ENCODE measurements at regions of chr1 and their contacts with region 1.

Region 1: GRCh38 chr1:175154629-175155472 is 37.7 kb downstream of the KIAA0040 start:
- DNase-seq: peak; percentile 51 to 80 (median 57)
- H3K4me3 ChIP-seq: no peak overlapping the region
- H3K4me3 Mint-ChIP-seq: no peak overlapping the region
- H3K27ac ChIP-seq: no peak overlapping the region
- H3K27ac Mint-ChIP-seq: peak overlapping the region in 1 of 8 donors; percentile 60
- H3K4me1 ChIP-seq: peaks cover 10% of the 10 kb centered on the region
- H3K4me1 Mint-ChIP-seq: peaks cover 15 to 18% (median 17%) of the 10 kb centered on the region in 3 donors
- H3K27me3 ChIP-seq: peaks cover 4% of the 10 kb centered on the region
- H3K27me3 Mint-ChIP-seq: peaks cover 26 to 30% of the 10 kb centered on the region in 2 donors

Region 2: DNA sequence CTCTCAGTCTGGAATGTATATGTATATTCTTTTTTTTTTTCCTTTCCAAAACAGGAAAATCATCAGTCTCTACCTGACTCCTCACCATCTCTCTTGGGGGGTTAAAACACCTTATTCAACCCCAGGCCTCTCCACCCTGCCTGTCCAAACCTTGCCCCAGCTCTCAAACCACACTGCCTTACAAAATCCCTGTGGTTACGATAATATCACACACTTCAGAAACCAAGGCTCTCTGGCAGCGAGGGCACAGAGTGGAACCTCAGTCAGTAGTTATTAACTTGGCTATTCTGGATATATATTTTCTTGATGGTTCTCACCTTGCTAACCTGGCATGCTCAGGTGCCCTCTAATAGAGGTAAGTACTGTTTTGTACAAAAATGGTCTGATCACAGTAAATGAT is 13.0 kb after region 1 on chr1:
- CTCF ChIA-PET with region 1: interaction called, 10 read pairs
- POLR2A ChIA-PET with region 1: no interaction called
- DNase-seq: no peak
- H3K4me3 ChIP-seq: no peak overlapping the region
- H3K4me3 Mint-ChIP-seq: peak overlapping the region in 1 of 7 donors; percentile 15
- H3K27ac ChIP-seq: no peak overlapping the region
- H3K27ac Mint-ChIP-seq: peak overlapping the region in 4 of 8 donors; percentile 62 to 91 (median 64)
- H3K4me1 ChIP-seq: peaks cover 9% of the 10 kb centered on the region
- H3K4me1 Mint-ChIP-seq: peaks cover 55 to 66% (median 60%) of the 10 kb centered on the region in 3 donors
- H3K27me3 ChIP-seq: no peaks in the 10 kb centered on the region
- H3K27me3 Mint-ChIP-seq: no peaks in the 10 kb centered on the region

Region 3: GRCh38 chr1:175183586-175183985 is 28.7 kb after region 1 on chr1:
- CTCF ChIA-PET with region 1: interaction called, 14 read pairs
- POLR2A ChIA-PET with region 1: no interaction called
- DNase-seq: no peak
- H3K4me3 ChIP-seq: no peak overlapping the region
- H3K4me3 Mint-ChIP-seq: peak overlapping the region in 1 of 7 donors; percentile 23
- H3K27ac ChIP-seq: no peak overlapping the region
- H3K27ac Mint-ChIP-seq: peak overlapping the region in 2 of 8 donors; percentile 38 to 83
- H3K4me1 ChIP-seq: peaks cover 89% of the 10 kb centered on the region
- H3K4me1 Mint-ChIP-seq: peaks cover 83 to 97% (median 97%) of the 10 kb centered on the region in 3 donors
- H3K27me3 ChIP-seq: no peaks in the 10 kb centered on the region
- H3K27me3 Mint-ChIP-seq: no peaks in the 10 kb centered on the region

Region 4: GRCh38 chr1:175208773-175209492 is 54.1 kb after region 1 on chr1:
- CTCF ChIA-PET with region 1: interaction called, 14 read pairs
- POLR2A ChIA-PET with region 1: interaction called, 3 read pairs
- DNase-seq: peak; percentile 11 to 80 (median 74)
- H3K4me3 ChIP-seq: peak overlapping the region; percentile 44
- H3K4me3 Mint-ChIP-seq: peak overlapping the region; percentile 72 to 92 (median 87)
- H3K27ac ChIP-seq: peak overlapping the region; percentile 43
- H3K27ac Mint-ChIP-seq: peak overlapping the region; percentile 80 to 97 (median 94)
- H3K4me1 ChIP-seq: peaks cover 61% of the 10 kb centered on the region
- H3K4me1 Mint-ChIP-seq: peaks cover 62 to 85% (median 76%) of the 10 kb centered on the region in 3 donors
- H3K27me3 ChIP-seq: no peaks in the 10 kb centered on the region
- H3K27me3 Mint-ChIP-seq: no peaks in the 10 kb centered on the region

Region 5: GRCh38 chr1:175319418-175320230 is 164.8 kb after region 1 on chr1:
- CTCF ChIA-PET with region 1: interaction called, 214 read pairs
- POLR2A ChIA-PET with region 1: no interaction called
- DNase-seq: peak; percentile 49 to 75 (median 58)
- H3K4me3 ChIP-seq: no peak overlapping the region
- H3K4me3 Mint-ChIP-seq: peak overlapping the region in 2 of 7 donors; percentile 12 to 49
- H3K27ac ChIP-seq: no peak overlapping the region
- H3K27ac Mint-ChIP-seq: peak overlapping the region in 2 of 8 donors; percentile 34 to 35
- H3K4me1 ChIP-seq: peaks cover 7% of the 10 kb centered on the region
- H3K4me1 Mint-ChIP-seq: peaks cover 4 to 10% (median 6%) of the 10 kb centered on the region in 3 donors
- H3K27me3 ChIP-seq: no peaks in the 10 kb centered on the region
- H3K27me3 Mint-ChIP-seq: peaks cover 7% of the 10 kb centered on the region in 2 donors

Measured in CD8-positive, alpha-beta memory T cell (primary cell).